CD4-positive, alpha-beta memory T cell (primary cell): ENCODE measurements at regions of chr9 and their contacts with region 1.

Region 1: GRCh38 chr9:115013998-115014397 is 83.6 kb upstream of the TNFSF8 start:
- DNase-seq: peak; percentile 78 to 79 (median 79)
- H3K4me3 ChIP-seq: no peak overlapping the region
- H3K4me3 Mint-ChIP-seq: no peak overlapping the region
- H3K27ac ChIP-seq: no peak overlapping the region
- H3K27ac Mint-ChIP-seq: peak overlapping the region in 1 of 7 donors; percentile 69
- H3K4me1 ChIP-seq: peaks cover 12% of the 10 kb centered on the region
- H3K4me1 Mint-ChIP-seq: peaks cover 19 to 21% (median 20%) of the 10 kb centered on the region in 4 donors
- H3K27me3 ChIP-seq: no peaks in the 10 kb centered on the region
- H3K27me3 Mint-ChIP-seq: peaks cover 0 to 1% of the 10 kb centered on the region in 2 donors

Region 2: GRCh38 chr9:114413861-114414301 is 600.1 kb before region 1 on chr9:
- CTCF ChIA-PET with region 1: no interaction called
- POLR2A ChIA-PET with region 1: no interaction called
- intact Hi-C with region 1: no loop called
- DNase-seq: no peak
- H3K4me3 ChIP-seq: no peak overlapping the region
- H3K4me3 Mint-ChIP-seq: no peak overlapping the region
- H3K27ac ChIP-seq: no peak overlapping the region
- H3K27ac Mint-ChIP-seq: peak overlapping the region in 2 of 7 donors; percentile 7 to 12
- H3K4me1 ChIP-seq: peaks cover 14% of the 10 kb centered on the region
- H3K4me1 Mint-ChIP-seq: peaks cover 14 to 23% (median 16%) of the 10 kb centered on the region in 4 donors
- H3K27me3 ChIP-seq: no peaks in the 10 kb centered on the region
- H3K27me3 Mint-ChIP-seq: no peaks in the 10 kb centered on the region

Region 3: DNA sequence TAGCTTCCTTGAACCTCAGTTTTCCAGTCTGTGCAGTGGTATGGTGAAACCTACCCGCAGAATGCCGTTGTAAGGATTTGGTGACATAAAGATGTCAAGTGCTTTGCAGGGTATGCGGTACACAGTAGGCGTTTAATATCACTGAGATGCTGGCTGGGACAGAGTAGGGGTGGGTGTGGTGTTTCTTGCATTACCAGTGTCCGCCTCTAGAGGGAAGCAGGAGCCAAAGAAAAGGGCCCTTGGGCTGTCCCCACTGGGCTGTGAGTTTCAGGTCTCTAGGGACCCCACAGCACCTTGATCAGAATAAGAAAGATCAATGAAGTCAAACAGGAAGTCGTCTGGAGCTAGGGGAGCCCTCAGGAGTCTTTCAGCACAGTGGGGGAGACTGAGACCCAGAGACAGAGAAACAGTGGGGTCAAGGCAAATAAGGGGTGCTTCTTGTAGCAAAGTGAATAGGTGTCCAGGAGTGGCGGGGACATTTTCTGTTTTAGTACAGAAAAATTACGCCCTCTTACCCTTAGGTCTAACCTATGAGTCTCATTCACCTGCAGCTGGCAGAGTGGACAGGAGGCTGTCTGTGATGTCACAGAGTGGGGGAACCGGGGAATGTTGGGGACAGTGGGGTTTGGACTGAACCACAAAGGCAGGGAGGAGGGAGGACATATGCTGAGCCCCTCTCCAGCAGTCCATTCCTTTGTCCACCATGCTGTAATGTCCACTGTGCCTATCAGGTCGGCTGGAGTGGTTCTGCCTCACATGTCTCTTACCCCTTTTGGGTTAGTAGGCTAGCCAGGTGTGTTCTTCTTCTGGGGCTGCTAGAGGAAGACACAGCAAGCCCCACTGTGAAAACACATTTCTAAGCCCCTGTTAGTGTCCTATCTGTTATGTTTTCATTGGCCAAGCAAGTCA is 351.7 kb before region 1 on chr9:
- CTCF ChIA-PET with region 1: no interaction called
- POLR2A ChIA-PET with region 1: no interaction called
- intact Hi-C with region 1: loop called (anchors 1 kb)
- DNase-seq: peak; percentile 45 to 52 (median 50)
- H3K4me3 ChIP-seq: no peak overlapping the region
- H3K4me3 Mint-ChIP-seq: no peak overlapping the region
- H3K27ac ChIP-seq: no peak overlapping the region
- H3K27ac Mint-ChIP-seq: no peak overlapping the region
- H3K4me1 ChIP-seq: no peaks in the 10 kb centered on the region
- H3K4me1 Mint-ChIP-seq: peaks cover 0 to 1% (median 0%) of the 10 kb centered on the region in 4 donors
- H3K27me3 ChIP-seq: no peaks in the 10 kb centered on the region
- H3K27me3 Mint-ChIP-seq: peaks cover 7% of the 10 kb centered on the region in 2 donors

Region 4: GRCh38 chr9:114691046-114691955 is 322.7 kb before region 1 on chr9:
- CTCF ChIA-PET with region 1: interaction called, 11 read pairs
- POLR2A ChIA-PET with region 1: no interaction called
- intact Hi-C with region 1: no loop called
- DNase-seq: peak; percentile 64 to 86 (median 75)
- H3K4me3 ChIP-seq: peak overlapping the region; percentile 4 to 46
- H3K4me3 Mint-ChIP-seq: peak overlapping the region; percentile 40 to 77 (median 72)
- H3K27ac ChIP-seq: peak overlapping the region; percentile 54
- H3K27ac Mint-ChIP-seq: peak overlapping the region; percentile 65 to 96 (median 93)
- H3K4me1 ChIP-seq: peaks cover 41% of the 10 kb centered on the region
- H3K4me1 Mint-ChIP-seq: peaks cover 28 to 45% (median 31%) of the 10 kb centered on the region in 4 donors
- H3K27me3 ChIP-seq: no peaks in the 10 kb centered on the region
- H3K27me3 Mint-ChIP-seq: no peaks in the 10 kb centered on the region

Region 5: DNA sequence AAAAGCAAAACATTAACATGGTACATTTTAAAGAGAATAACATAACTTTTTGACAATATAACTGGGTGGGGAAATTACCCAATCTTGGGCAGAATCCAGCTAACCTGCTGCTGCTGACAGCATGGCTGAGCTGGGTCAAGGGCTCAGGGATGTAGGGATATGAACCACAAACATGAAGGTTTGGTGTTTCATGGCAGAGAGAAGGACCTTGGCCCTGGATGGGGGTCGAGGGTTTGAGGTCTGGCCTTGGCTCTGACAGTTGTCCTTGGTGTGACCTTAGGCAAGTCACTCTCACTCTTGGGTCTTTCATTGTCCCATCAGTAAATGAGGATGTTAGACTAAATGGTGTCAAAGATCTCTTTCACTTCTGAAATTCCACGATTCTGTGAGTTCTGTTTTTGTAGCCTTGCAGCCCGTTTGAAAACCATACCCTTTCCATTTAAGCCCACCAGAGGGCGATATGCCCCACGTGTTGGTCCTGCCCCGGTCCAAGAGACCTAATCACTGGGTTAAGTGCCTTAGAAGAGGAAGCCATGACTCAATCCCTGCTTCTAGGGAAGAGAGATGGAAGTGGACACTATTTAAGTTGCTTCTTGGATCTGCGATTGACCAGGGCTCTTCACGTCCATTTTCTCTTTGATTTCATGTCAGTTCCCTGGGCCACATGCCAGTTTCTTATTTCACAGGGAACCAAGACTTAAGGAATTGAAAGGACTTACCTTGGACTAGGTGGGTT is 275.2 kb before region 1 on chr9:
- CTCF ChIA-PET with region 1: interaction called, 110 read pairs
- POLR2A ChIA-PET with region 1: no interaction called
- intact Hi-C with region 1: loop called (anchors 1 kb)
- DNase-seq: peak; percentile 73 to 75 (median 74)
- H3K4me3 ChIP-seq: no peak overlapping the region
- H3K4me3 Mint-ChIP-seq: peak overlapping the region in 3 of 8 donors; percentile 16 to 64 (median 36)
- H3K27ac ChIP-seq: no peak overlapping the region
- H3K27ac Mint-ChIP-seq: peak overlapping the region; percentile 67 to 95 (median 91)
- H3K4me1 ChIP-seq: peaks cover 44% of the 10 kb centered on the region
- H3K4me1 Mint-ChIP-seq: peaks cover 34 to 54% (median 43%) of the 10 kb centered on the region in 4 donors
- H3K27me3 ChIP-seq: no peaks in the 10 kb centered on the region
- H3K27me3 Mint-ChIP-seq: no peaks in the 10 kb centered on the region

Region 6: DNA sequence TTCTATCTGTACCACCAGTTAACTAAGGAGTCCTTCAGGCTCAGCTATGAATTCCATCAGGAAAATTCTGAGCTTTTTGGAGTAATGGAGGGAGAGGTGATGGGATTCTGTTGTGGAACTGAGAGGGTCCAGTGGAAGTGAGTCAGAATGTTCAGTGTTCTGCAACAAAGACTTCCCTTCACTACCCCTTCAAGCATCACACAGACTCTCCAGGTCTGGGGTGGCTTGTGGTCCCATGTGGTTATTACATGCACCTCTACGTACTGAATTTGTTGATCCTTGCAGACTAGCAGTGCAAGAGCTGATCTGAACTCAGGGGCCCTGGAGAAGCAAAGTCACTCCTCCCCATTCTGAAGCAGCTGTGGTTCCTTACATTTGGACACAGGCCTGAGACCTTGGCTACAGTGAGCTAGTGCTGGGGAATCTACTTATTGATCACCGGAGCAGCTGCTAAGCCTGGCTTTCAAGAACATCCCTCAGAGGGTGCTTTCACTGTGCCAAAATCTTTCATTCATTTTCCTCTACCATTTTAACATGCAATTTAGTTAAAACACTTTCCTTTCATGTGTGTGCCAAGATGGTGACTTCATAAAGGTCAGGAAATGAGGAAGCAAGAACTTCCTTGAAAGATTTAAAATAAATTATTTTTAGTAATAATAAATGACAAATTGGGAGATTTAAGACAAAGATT is 179.0 kb after region 1 on chr9:
- CTCF ChIA-PET with region 1: no interaction called
- POLR2A ChIA-PET with region 1: no interaction called
- intact Hi-C with region 1: no loop called
- DNase-seq: no peak
- H3K4me3 ChIP-seq: no peak overlapping the region
- H3K4me3 Mint-ChIP-seq: no peak overlapping the region
- H3K27ac ChIP-seq: no peak overlapping the region
- H3K27ac Mint-ChIP-seq: no peak overlapping the region
- H3K4me1 ChIP-seq: no peaks in the 10 kb centered on the region
- H3K4me1 Mint-ChIP-seq: peaks cover 0 to 2% (median 0%) of the 10 kb centered on the region in 4 donors
- H3K27me3 ChIP-seq: no peaks in the 10 kb centered on the region
- H3K27me3 Mint-ChIP-seq: peaks cover 22 to 32% of the 10 kb centered on the region in 2 donors

Region 7: GRCh38 chr9:115226127-115226526 is 212.1 kb after region 1 on chr9:
- CTCF ChIA-PET with region 1: no interaction called
- POLR2A ChIA-PET with region 1: no interaction called
- intact Hi-C with region 1: no loop called
- DNase-seq: no peak
- H3K4me3 ChIP-seq: no peak overlapping the region
- H3K4me3 Mint-ChIP-seq: no peak overlapping the region
- H3K27ac ChIP-seq: no peak overlapping the region
- H3K27ac Mint-ChIP-seq: no peak overlapping the region
- H3K4me1 ChIP-seq: no peaks in the 10 kb centered on the region
- H3K4me1 Mint-ChIP-seq: no peaks in the 10 kb centered on the region
- H3K27me3 ChIP-seq: no peaks in the 10 kb centered on the region
- H3K27me3 Mint-ChIP-seq: peaks cover 9% of the 10 kb centered on the region in 2 donors

Region 8: GRCh38 chr9:115524453-115525059 is 510.6 kb after region 1 on chr9:
- CTCF ChIA-PET with region 1: no interaction called
- POLR2A ChIA-PET with region 1: no interaction called
- intact Hi-C with region 1: loop called (anchors 2 kb)
- DNase-seq: peak in 4 of 5 donors; percentile 12 to 28 (median 24)
- H3K4me3 ChIP-seq: no peak overlapping the region
- H3K4me3 Mint-ChIP-seq: no peak overlapping the region
- H3K27ac ChIP-seq: no peak overlapping the region
- H3K27ac Mint-ChIP-seq: no peak overlapping the region
- H3K4me1 ChIP-seq: no peaks in the 10 kb centered on the region
- H3K4me1 Mint-ChIP-seq: no peaks in the 10 kb centered on the region
- H3K27me3 ChIP-seq: no peaks in the 10 kb centered on the region
- H3K27me3 Mint-ChIP-seq: peaks cover 10 to 11% of the 10 kb centered on the region in 2 donors